Activated naive CD4-positive, alpha-beta T cell treated with anti-CD3 and anti-CD28 coated beads for 36 hours (primary cell): ENCODE measurements at regions of chr5 and their contacts with region 1.

Region 1: DNA sequence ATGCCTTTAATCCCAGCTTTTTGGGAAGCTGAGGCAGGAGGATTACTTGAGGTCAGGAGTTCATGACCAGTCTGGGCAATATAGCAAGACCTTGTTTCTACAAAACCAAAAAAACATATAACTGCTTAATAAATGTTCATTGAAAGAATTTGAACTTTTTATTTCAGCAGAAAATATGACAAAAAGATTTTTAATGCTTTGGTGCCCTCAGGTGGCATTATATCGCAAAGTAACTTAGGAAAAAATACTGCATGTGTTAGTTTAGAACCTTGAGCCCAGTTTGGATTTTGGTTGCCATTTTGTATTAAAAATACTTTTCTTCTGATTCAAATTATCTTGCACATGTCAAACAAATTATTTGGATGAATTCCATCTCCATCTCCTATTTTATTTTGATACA is 103.2 kb downstream of the GPBP1 start:
- DNase-seq: no peak
- H3K4me3 Mint-ChIP-seq: no peak overlapping the region
- H3K27ac Mint-ChIP-seq: no peak overlapping the region
- H3K4me1 Mint-ChIP-seq: no peaks in the 10 kb centered on the region
- H3K27me3 Mint-ChIP-seq: peaks cover 6% of the 10 kb centered on the region

Region 2: GRCh38 chr5:56900858-56901578 is 376.1 kb before region 1 on chr5:
- CTCF ChIA-PET with region 1: interaction called, 5 read pairs
- intact Hi-C with region 1: loop called (anchors 1 kb)
- DNase-seq: peak; percentile 46
- H3K4me3 Mint-ChIP-seq: no peak overlapping the region
- H3K27ac Mint-ChIP-seq: no peak overlapping the region
- H3K4me1 Mint-ChIP-seq: peaks cover 2% of the 10 kb centered on the region
- H3K27me3 Mint-ChIP-seq: no peaks in the 10 kb centered on the region